Gastrocnemius medialis (tissue), 4 donors: ENCODE measurements at regions of chr17 and their contacts with region 1.

Region 1: DNA sequence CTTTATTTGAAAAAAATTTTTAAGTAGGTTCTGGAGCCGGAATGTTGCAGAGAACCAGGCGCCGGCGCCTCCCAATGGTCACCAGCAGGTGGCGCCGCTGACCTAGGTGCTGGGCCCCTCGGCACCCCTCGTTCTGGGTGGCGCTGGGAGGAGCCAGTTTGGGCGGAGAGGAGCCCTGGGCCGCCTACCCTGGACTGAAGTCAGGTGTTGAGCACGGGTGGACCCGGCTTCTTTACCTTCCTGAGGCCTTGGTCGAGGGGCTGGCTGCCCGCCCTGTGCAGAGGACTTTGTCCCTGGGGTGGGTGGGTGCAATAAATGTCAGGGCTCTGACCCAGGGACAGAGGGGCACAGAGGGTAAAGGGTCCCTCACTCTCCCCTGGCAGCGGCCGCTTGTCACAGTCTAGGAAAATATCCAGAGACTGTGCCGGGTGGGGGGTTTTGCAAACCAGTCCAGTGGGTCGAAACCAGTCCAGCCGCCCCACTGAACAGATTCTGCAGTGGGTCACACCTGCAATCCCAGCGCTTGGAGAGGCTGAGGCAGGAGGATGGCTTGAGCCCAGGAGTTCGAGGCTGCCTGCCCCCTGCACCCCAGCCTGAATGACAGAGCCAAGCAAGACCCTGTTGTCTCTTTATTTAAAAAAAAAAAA is 30.1 kb upstream of the TNFRSF13B start:
- DNase-seq: peak; percentile 44 to 65
- ATAC-seq: peak; percentile 59 to 73
- H3K4me3 ChIP-seq: peak overlapping the region in 2 of 4 donors; percentile 20 to 31
- H3K27ac ChIP-seq: no peak overlapping the region
- H3K4me1 ChIP-seq: no peaks in the 10 kb centered on the region
- H3K27me3 ChIP-seq: no peaks in the 10 kb centered on the region
- CTCF ChIP-seq: peak; percentile 86 to 99 (median 96)
- POLR2A ChIP-seq: no peak

Region 2: GRCh38 chr17:17125136-17126084 is 123.4 kb after region 1 on chr17:
- in situ Hi-C with region 1: loop called in 1 of 4 experiments (anchors 25 kb)
- intact Hi-C with region 1: loop called (anchors 10 kb)
- DNase-seq: no peak
- ATAC-seq: no peak
- H3K4me3 ChIP-seq: no peak overlapping the region
- H3K27ac ChIP-seq: peak overlapping the region in 3 of 4 donors; percentile 24 to 44 (median 35)
- H3K4me1 ChIP-seq: peaks cover 58 to 70% of the 10 kb centered on the region in 2 donors
- H3K27me3 ChIP-seq: no peaks in the 10 kb centered on the region
- CTCF ChIP-seq: no peak
- POLR2A ChIP-seq: no peak

Region 3: GRCh38 chr17:17141860-17142552 is 140.0 kb after region 1 on chr17:
- in situ Hi-C with region 1: loop called in 1 of 4 experiments (anchors 25 kb)
- intact Hi-C with region 1: no loop called
- DNase-seq: no peak
- ATAC-seq: peak in 1 of 2 donors; percentile 41
- H3K4me3 ChIP-seq: no peak overlapping the region
- H3K27ac ChIP-seq: peak overlapping the region in 2 of 4 donors; percentile 21 to 45
- H3K4me1 ChIP-seq: peaks cover 19 to 27% of the 10 kb centered on the region in 2 donors
- H3K27me3 ChIP-seq: no peaks in the 10 kb centered on the region
- CTCF ChIP-seq: peak; percentile 70 to 83 (median 81)
- POLR2A ChIP-seq: no peak

Region 4: GRCh38 chr17:17280613-17281549 is 278.9 kb after region 1 on chr17 and contains the start of gene COPS3:
- in situ Hi-C with region 1: loop called in 1 of 4 experiments (anchors 25 kb)
- intact Hi-C with region 1: no loop called
- DNase-seq: peak; percentile 98 to 99
- ATAC-seq: peak; percentile 95
- H3K4me3 ChIP-seq: peak within 1 kb of the TSS; percentile 88 to 99 (median 92)
- H3K27ac ChIP-seq: peak within 1 kb of the TSS; percentile 97 to 100 (median 100)
- H3K4me1 ChIP-seq: peaks cover 39 to 41% of the 10 kb centered on the region in 2 donors
- H3K27me3 ChIP-seq: no peaks in the 10 kb centered on the region
- CTCF ChIP-seq: no peak
- POLR2A ChIP-seq: peak; percentile 90 to 91
- total RNA-seq, gene COPS3: 145 to 249 (median 175) TPM

Region 5: DNA sequence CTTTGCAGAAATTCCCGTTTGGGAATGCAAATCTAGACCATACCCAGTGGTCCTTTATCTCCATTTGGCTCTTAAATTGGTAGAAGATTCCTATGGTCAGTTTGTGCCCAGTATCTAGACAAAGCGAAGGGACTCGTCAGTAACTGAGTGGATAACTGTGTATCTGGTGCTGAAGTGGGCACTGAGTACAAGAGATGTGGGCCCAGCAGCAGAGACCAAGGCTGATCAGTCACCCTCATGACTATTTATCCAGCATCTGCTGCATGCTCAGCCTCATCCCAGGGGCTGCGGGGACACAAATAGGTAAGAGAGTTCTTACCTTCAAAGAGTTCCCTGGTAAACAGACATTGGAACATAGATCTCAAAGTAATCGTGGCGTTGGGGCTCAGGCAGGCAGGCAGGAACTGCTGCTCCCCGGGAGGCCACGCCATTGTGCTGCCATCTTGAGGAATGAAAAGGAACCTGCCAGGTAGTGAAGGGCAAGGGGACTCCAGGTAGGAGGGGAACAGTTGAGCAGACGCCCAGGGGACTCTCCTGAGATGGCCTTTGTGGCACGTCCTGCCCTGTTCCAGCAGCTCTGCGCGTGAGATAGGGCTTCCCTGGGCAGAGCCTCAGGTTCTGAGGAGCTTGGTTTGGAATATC is 311.5 kb after region 1 on chr17:
- in situ Hi-C with region 1: no loop called
- intact Hi-C with region 1: loop called (anchors 5 kb)
- DNase-seq: no peak
- ATAC-seq: no peak
- H3K4me3 ChIP-seq: no peak overlapping the region
- H3K27ac ChIP-seq: no peak overlapping the region
- H3K4me1 ChIP-seq: no peaks in the 10 kb centered on the region
- H3K27me3 ChIP-seq: no peaks in the 10 kb centered on the region
- CTCF ChIP-seq: peak in 3 of 5 experiments; percentile 28 to 57 (median 46)
- POLR2A ChIP-seq: no peak

Region 6: GRCh38 chr17:17641621-17642409 is 639.8 kb after region 1 on chr17:
- in situ Hi-C with region 1: loop called in 1 of 4 experiments (anchors 25 kb)
- intact Hi-C with region 1: loop called (anchors 2 kb)
- DNase-seq: peak; percentile 45 to 60
- ATAC-seq: peak; percentile 86 to 89
- H3K4me3 ChIP-seq: no peak overlapping the region
- H3K27ac ChIP-seq: no peak overlapping the region
- H3K4me1 ChIP-seq: no peaks in the 10 kb centered on the region
- H3K27me3 ChIP-seq: no peaks in the 10 kb centered on the region
- CTCF ChIP-seq: peak; percentile 63 to 91 (median 88)
- POLR2A ChIP-seq: no peak